Lower leg skin (tissue), 4 donors: ENCODE measurements at regions of chr10 and their contacts with region 1.

Region 1: DNA sequence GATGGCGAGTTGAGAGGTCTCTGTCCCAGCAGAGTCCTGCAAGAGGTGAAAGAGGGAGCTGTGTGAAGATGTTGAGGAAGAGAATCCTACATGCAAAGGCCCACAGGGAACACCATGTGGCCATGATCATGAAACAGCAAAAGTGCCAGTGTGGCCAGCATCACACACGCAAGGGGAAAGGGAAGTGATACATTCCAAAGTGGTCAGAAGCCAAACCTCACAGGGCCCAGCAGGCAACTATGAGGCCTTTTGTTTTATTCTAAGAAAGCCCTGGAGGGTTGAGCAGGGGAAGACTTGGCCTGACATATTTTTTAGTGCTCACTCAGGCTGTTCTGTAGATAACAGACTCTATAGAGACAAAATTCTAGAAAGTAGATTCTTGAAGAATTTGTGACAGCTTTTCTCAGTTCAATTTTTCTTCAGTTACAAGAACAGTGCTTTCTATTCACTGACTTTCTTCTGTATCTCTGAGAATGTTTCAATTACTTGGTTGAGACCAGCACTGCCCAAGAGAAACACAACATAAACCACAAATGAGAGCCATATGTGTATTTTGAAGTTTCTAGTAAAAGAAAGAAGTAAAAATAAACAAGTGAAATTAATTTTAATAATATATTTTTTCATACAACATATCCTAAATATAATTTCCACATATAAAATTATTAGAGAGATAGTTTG is 82.3 kb downstream of the HTR7 start:
- DNase-seq: no peak
- H3K4me3 ChIP-seq: no peak overlapping the region
- CTCF ChIP-seq: no peak
- POLR2A ChIP-seq: no peak

Region 2: DNA sequence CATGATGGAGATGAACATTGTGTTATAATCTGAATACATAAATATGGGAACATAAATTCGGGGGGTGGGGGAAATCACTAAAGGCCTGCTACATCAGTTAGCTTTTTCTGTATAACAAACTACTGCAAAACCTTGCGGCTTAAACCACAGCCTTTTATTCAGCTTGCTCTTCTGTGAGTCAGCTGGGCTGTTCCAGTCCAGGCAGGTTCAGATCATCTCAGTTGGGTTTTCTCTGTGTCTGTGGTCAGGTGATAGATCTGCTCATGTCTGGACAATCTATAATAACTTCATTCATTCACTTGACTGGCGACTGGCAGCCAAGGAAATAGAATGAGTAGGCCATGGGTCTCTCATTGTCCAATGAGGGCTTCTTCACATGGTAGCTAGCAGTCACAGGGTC is 58.8 kb after region 1 on chr10:
- intact Hi-C with region 1: loop called (anchors 2 kb)
- DNase-seq: no peak
- H3K4me3 ChIP-seq: no peak overlapping the region
- CTCF ChIP-seq: no peak
- POLR2A ChIP-seq: no peak